Caki2 (cell line): ENCODE measurements at regions of chr9 and their contacts with region 1.

Region 1: GRCh38 chr9:20356403-20357035 is 265.8 kb downstream of the MLLT3 start:
- DNase-seq: peak; percentile 65

Region 2: DNA sequence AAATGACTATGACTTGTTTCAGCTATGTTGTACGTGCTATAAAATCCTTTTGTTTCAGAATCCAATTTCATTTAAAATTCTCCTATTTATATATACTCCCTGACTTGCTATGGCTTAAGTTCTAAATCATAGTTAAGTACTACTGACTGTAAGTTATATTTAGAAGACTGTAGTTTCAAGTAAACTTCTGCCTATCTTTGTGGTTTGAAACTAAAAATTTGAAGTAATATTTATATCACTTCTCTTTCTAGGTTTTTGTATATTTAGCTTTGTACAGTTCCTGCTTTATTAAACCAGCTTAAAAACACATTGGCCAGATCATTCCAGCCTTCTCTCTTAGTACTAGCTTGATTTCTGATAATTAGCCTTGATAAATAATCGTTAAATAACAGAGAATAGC is 69.5 kb after region 1 on chr9:
- in situ Hi-C with region 1: no loop called
- DNase-seq: no peak

Region 3: GRCh38 chr9:20622330-20623020 is 266.0 kb after region 1 on chr9 and contains the start of gene MLLT3:
- in situ Hi-C with region 1: loop called (anchors 10 kb)
- DNase-seq: peak; percentile 90
- total RNA-seq, gene MLLT3: 32.5 and 37.6 TPM in 2 replicates